AG04449 (cell line): ENCODE measurements at regions of chr12 and their contacts with region 1.

Region 1: GRCh38 chr12:50038336-50038735 is 13.0 kb upstream of the RACGAP1 start:
- DNase-seq: no peak
- H3K4me3 ChIP-seq: no peak overlapping the region
- CTCF ChIP-seq: no peak

Region 2: DNA sequence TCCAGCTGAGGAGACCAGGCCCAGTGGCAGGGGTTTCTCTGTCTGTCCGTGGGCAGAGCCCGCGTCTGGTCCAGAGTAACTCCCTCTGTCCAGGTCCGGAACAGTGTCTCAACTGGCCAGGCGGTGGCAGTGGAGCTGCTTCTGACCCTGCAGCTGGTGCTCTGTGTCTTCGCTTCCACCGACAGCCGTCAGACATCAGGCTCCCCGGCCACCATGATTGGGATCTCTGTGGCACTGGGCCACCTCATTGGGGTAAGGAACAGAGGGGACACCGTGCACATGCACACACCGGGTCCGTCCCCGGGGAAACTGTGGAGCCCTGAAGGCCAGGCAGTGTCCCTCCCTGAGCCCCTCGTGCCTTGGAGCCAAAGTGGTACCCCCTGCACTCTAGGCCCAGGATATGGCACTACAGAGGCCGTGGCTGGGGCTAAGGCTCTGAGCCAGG is 64.1 kb before region 1 on chr12:
- CTCF ChIA-PET with region 1: interaction called, 119 read pairs
- POLR2A ChIA-PET with region 1: no interaction called
- DNase-seq: no peak
- H3K4me3 ChIP-seq: no peak overlapping the region
- CTCF ChIP-seq: peak; percentile 80

Region 3: GRCh38 chr12:49983892-49984291 is 54.4 kb before region 1 on chr12:
- CTCF ChIA-PET with region 1: interaction called, 21 read pairs
- POLR2A ChIA-PET with region 1: no interaction called
- DNase-seq: peak; percentile 45
- H3K4me3 ChIP-seq: no peak overlapping the region; the same call in 1 of the 2 replicates
- CTCF ChIP-seq: no peak

Region 4: DNA sequence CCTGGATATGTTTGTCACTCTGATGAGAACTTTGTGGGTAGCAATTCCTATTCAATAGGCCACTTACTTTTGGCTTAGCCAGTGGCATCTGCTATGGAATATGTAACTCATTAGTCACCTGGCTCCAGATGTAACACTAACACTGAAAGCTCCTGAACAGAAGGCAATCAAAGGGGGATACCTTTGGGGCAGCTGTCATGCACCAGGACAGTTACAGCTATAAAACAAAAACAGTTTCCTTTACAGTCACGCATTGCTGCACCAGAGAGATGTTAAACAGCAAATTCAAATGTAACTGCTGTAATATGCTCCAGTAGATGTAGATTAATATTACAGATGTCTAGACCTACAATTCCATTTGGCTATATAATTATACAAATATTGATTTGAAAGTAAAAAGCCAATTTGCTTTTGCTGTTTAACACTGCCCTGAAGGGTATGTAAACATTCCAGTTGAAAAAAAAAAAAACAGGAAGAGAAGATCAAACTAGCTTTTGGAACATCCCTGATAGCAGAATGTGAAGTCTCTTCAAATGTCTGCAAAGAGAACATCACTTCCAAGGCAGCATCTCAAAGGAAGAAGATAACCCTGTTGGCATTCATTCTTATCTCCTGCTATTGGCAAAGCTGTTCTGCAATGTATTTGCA is 31.4 kb before region 1 on chr12:
- CTCF ChIA-PET with region 1: interaction called, 24 read pairs
- POLR2A ChIA-PET with region 1: no interaction called
- DNase-seq: no peak
- H3K4me3 ChIP-seq: no peak overlapping the region
- CTCF ChIP-seq: no peak

Region 5: DNA sequence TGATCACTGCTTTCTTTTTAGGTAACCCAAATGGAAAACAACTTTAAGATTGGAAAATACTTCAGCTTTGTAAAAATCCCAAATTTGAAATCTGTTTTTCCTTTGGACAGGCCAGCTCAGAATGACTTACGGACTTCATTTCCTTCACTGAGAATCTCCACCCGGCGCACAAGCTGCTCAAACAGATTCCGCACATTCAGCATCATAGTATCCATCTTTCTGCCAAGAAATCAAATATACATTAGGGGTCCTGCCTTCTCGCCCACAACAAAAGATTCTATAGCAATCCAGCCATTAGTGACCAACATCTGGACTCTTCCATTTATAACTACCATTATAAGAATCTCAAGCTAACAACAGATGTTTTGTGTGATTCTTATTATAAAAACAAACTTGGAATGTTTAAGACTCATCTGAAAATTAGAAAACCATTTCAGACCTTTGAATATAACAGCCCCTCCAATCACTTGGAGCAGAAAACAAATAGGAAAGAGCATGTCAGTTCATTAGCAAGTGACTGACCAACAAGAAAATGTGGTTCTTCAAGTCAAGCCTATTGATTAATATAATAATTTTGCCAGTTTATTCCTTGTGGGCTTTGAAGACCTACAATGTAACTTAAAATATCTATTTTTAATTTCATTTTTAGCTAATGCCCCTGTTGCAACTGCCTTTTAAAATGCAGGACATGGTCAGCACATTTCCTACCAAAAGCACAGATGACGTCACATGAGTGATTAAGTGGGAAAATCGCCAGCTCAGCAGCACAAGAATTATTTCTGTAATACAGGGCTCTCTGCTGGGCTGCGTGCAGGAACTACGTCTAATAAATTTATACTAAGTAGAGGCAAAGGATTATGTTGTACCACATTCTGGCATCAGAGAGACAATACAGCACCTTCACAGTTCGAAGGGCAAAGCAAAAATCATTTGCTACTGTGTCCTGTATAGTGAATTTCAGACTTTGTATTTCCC is 21.5 kb before region 1 on chr12:
- CTCF ChIA-PET with region 1: interaction called, 52 read pairs
- POLR2A ChIA-PET with region 1: no interaction called
- DNase-seq: no peak
- H3K4me3 ChIP-seq: no peak overlapping the region
- CTCF ChIP-seq: no peak

Region 6: DNA sequence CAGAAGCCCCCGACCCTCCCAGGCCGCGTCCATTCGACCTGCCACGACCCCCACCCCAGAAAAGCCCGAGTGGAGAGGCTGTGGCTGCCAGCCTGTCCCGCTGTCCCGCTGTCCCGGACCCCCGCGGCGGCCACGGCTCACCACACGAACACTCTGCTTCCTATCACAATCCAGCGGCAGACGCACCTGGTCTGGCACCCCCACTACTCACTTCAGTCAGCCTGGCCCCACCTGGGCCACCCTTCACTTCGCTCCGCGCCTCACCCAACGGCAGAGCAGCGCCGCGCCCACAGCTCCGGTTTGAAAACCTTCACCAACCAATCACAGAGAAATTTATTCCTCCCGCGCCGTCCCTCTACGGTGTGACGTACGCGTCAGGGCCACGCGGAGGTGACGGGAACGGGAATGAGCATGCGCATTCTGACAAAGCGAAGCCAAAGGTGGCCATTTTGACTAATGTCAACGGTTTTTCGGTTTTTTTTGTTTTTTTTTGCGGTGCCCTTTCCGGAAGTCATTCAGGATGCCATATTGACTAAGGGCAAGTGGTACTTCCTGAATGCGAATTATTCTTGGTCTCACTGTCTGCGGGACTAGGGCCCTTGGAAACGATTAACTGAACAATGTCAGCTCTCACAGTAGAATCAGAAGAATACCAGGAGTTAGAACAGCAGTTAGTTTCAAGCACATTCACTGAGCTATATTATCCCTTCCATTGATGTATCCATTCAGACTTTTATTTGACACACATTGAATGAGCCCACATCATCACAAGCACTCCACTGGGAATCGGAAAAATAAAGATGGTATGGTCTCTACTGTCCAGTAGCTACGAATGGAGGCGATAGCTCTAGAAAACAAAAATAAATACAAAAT is 12.9 kb before region 1 on chr12 and contains the start of gene RACGAP1:
- CTCF ChIA-PET with region 1: interaction called, 59 read pairs
- POLR2A ChIA-PET with region 1: no interaction called
- DNase-seq: peak; percentile 74
- H3K4me3 ChIP-seq: peak within 1 kb of the TSS; percentile 94
- CTCF ChIP-seq: no peak